ENCODE measurements at regions of chr2 and their contacts with region 1.

Region 1: GRCh38 chr2:43484323-43484930 is 111.4 kb downstream of the THADA start:
- DNase-seq: no peak
- ATAC-seq: peak; percentile 34
- H3K4me3 ChIP-seq: no peak overlapping the region
- H3K27ac ChIP-seq: no peak overlapping the region
- H3K4me1 ChIP-seq: peaks cover 22% of the 10 kb centered on the region
- H3K27me3 ChIP-seq: no peaks in the 10 kb centered on the region
- CTCF ChIP-seq: peak in 2 of 3 experiments; percentile 59 to 73; a peak in 5 of 6 replicates
- EP300 ChIP-seq: no peak
- POLR2A ChIP-seq: no peak
- RAD21 ChIP-seq: peak; percentile 76

Region 2: GRCh38 chr2:42828487-42829425 is 655.7 kb before region 1 on chr2:
- CTCF ChIA-PET with region 1: interaction called, 16 read pairs
- POLR2A ChIA-PET with region 1: no interaction called
- RAD21 ChIA-PET with region 1: interaction called, 4 read pairs
- SMC1A ChIA-PET with region 1: interaction called, 6 read pairs
- in situ Hi-C with region 1: no loop called
- intact Hi-C with region 1: loop called (anchors 2 kb)
- DNase-seq: peak; percentile 15
- ATAC-seq: peak; percentile 97
- H3K4me3 ChIP-seq: no peak overlapping the region
- H3K27ac ChIP-seq: no peak overlapping the region
- H3K4me1 ChIP-seq: no peaks in the 10 kb centered on the region
- H3K27me3 ChIP-seq: no peaks in the 10 kb centered on the region; a peak in 1 of 4 replicates
- CTCF ChIP-seq: peak; percentile 92 to 98 (median 93)
- EP300 ChIP-seq: no peak
- POLR2A ChIP-seq: no peak
- RAD21 ChIP-seq: peak; percentile 82

Region 3: DNA sequence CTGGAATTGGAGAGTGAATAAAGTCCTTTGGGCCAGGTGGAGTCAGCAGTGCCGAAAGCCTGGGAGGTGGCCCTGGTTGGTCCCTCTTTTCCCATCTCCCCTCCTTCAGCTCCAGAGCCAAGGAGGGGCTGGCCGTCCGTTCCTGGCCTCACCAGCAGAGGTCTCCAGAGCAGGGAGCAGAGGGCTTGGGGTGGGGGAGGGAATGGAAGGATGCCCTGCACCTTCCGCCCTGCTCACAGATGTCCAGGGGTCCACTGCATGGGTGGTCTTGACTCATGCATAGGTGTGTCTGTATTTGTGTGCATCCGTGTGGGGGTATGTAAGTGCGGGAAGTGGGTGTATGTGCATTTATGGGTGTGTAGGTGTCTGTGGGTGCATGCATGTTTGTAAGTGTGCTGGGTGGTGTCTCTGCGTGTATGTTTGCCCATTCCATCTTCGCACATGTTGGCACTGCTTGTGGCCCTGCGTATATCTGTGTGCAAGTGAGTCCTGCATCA is 459.9 kb before region 1 on chr2:
- CTCF ChIA-PET with region 1: interaction called, 36 read pairs
- POLR2A ChIA-PET with region 1: no interaction called
- RAD21 ChIA-PET with region 1: interaction called, 13 read pairs
- SMC1A ChIA-PET with region 1: interaction called, 14 read pairs
- in situ Hi-C with region 1: no loop called
- intact Hi-C with region 1: no loop called
- DNase-seq: no peak
- ATAC-seq: peak; percentile 93
- H3K4me3 ChIP-seq: no peak overlapping the region
- H3K27ac ChIP-seq: no peak overlapping the region
- H3K4me1 ChIP-seq: no peaks in the 10 kb centered on the region
- H3K27me3 ChIP-seq: no peaks in the 10 kb centered on the region; a peak in 1 of 4 replicates
- CTCF ChIP-seq: peak; percentile 76 to 87 (median 81)
- EP300 ChIP-seq: no peak
- POLR2A ChIP-seq: no peak
- RAD21 ChIP-seq: peak; percentile 80

Region 4: GRCh38 chr2:43239981-43240761 is 244.3 kb before region 1 on chr2:
- CTCF ChIA-PET with region 1: interaction called, 8 read pairs
- POLR2A ChIA-PET with region 1: no interaction called
- RAD21 ChIA-PET with region 1: interaction called, 13 read pairs
- SMC1A ChIA-PET with region 1: interaction called, 29 read pairs
- in situ Hi-C with region 1: no loop called
- intact Hi-C with region 1: no loop called
- DNase-seq: no peak
- ATAC-seq: peak; percentile 76
- H3K4me3 ChIP-seq: no peak overlapping the region
- H3K27ac ChIP-seq: peak overlapping the region; percentile 70
- H3K4me1 ChIP-seq: peaks cover 17% of the 10 kb centered on the region
- H3K27me3 ChIP-seq: no peaks in the 10 kb centered on the region
- CTCF ChIP-seq: peak; percentile 16 to 26 (median 22); a peak in 3 of 6 replicates
- EP300 ChIP-seq: no peak
- POLR2A ChIP-seq: no peak
- RAD21 ChIP-seq: peak; percentile 15; the same call in 1 of the 2 replicates

Region 5: DNA sequence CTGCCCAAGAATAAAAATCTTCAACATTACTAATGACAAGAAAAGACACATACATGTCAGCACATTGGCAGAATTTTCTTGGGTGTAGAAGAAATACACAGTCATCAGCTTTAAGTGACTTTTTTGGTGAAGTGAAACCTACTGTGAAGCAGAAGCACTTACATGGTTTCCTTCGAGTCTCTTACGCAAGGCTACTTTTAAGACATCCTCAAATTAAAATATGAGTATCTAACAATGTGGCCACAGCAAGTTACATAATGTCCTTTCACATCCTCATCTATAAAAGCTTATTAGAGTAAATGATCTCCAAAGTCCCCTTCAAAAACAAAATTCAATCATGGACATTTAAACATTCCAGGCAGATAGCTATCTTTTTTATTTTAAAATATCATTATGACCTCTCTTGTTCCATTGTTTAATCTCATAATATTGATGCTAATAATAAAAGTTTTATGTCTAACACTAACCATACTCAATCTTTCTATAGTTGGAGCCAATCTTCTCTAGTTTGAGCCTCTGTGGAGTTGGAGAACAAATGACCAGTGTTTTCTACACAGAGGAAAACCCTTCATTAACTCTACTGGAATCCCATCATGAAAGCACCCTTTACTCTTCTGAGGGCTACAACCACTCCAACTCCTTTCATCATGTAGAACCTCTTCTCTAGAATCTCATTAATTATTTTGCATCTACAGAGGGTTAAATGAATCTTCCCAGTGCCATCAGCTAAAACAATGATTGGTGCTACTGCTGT is 75.8 kb before region 1 on chr2:
- CTCF ChIA-PET with region 1: interaction called, 42 read pairs
- POLR2A ChIA-PET with region 1: interaction called, 13 read pairs
- RAD21 ChIA-PET with region 1: interaction called, 112 read pairs
- SMC1A ChIA-PET with region 1: interaction called, 76 read pairs
- in situ Hi-C with region 1: loop called (anchors 5 kb)
- intact Hi-C with region 1: no loop called
- DNase-seq: peak; percentile 76
- ATAC-seq: peak; percentile 86
- H3K4me3 ChIP-seq: no peak overlapping the region
- H3K27ac ChIP-seq: peak overlapping the region; percentile 94
- H3K4me1 ChIP-seq: peaks cover 50% of the 10 kb centered on the region
- H3K27me3 ChIP-seq: no peaks in the 10 kb centered on the region
- CTCF ChIP-seq: no peak
- EP300 ChIP-seq: peak; percentile 71 to 87; a peak in 2 of 4 replicates
- POLR2A ChIP-seq: no peak
- RAD21 ChIP-seq: no peak

Region 6: GRCh38 chr2:43495727-43496126 is 11.3 kb after region 1 on chr2:
- CTCF ChIA-PET with region 1: interaction called, 22 read pairs
- POLR2A ChIA-PET with region 1: no interaction called
- RAD21 ChIA-PET with region 1: interaction called, 3 read pairs
- SMC1A ChIA-PET with region 1: interaction called, 22 read pairs
- in situ Hi-C with region 1: no loop called
- intact Hi-C with region 1: no loop called
- DNase-seq: no peak
- ATAC-seq: no peak
- H3K4me3 ChIP-seq: no peak overlapping the region
- H3K27ac ChIP-seq: no peak overlapping the region
- H3K4me1 ChIP-seq: no peaks in the 10 kb centered on the region
- H3K27me3 ChIP-seq: no peaks in the 10 kb centered on the region
- CTCF ChIP-seq: no peak
- EP300 ChIP-seq: no peak
- POLR2A ChIP-seq: no peak
- RAD21 ChIP-seq: no peak

Region 7: GRCh38 chr2:43595603-43596412 is 111.4 kb after region 1 on chr2 and contains the start of gene THADA:
- CTCF ChIA-PET with region 1: no interaction called
- POLR2A ChIA-PET with region 1: no interaction called
- RAD21 ChIA-PET with region 1: interaction called, 11 read pairs
- SMC1A ChIA-PET with region 1: interaction called, 3 read pairs
- in situ Hi-C with region 1: no loop called
- intact Hi-C with region 1: no loop called
- DNase-seq: peak; percentile 98
- ATAC-seq: peak; percentile 98
- H3K4me3 ChIP-seq: peak within 1 kb of the TSS; percentile 80
- H3K27ac ChIP-seq: peak within 1 kb of the TSS; percentile 94
- H3K4me1 ChIP-seq: peaks cover 3% of the 10 kb centered on the region; the same call in 1 of the 2 replicates
- H3K27me3 ChIP-seq: no peaks in the 10 kb centered on the region
- CTCF ChIP-seq: no peak
- EP300 ChIP-seq: no peak
- POLR2A ChIP-seq: peak; percentile 99
- RAD21 ChIP-seq: no peak
- polyA plus RNA-seq, gene THADA: 17.0 to 17.5 TPM

Region 8: DNA sequence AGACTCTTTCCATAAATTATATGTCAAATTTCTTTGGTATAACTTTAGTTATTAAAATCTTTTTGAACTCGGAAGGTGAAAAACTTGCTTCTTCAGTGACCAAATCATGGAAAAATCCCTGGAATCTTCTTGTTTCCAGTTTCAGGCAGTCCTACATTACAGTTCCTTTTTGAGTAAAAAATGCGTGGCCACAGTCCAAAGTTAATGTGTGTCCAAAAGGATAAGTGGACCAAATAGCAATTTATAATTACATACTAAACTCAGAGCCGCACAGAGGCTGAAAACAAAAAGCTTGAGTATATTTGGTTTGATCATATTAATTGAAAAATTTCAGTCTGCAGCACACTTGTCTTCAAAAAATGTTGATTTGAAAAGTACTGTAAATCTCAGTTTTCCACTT is 261.0 kb after region 1 on chr2:
- CTCF ChIA-PET with region 1: no interaction called
- POLR2A ChIA-PET with region 1: no interaction called
- RAD21 ChIA-PET with region 1: no interaction called
- SMC1A ChIA-PET with region 1: no interaction called
- in situ Hi-C with region 1: no loop called
- intact Hi-C with region 1: no loop called
- DNase-seq: no peak
- ATAC-seq: no peak
- H3K4me3 ChIP-seq: no peak overlapping the region
- H3K27ac ChIP-seq: no peak overlapping the region
- H3K4me1 ChIP-seq: no peaks in the 10 kb centered on the region
- H3K27me3 ChIP-seq: peaks cover 0 to 1% of the 10 kb centered on the region in 2 experiments; a peak in 1 of 4 replicates
- CTCF ChIP-seq: no peak
- EP300 ChIP-seq: no peak
- POLR2A ChIP-seq: no peak
- RAD21 ChIP-seq: no peak

Region 9: GRCh38 chr2:43890855-43891254 is 406.4 kb after region 1 on chr2:
- CTCF ChIA-PET with region 1: no interaction called
- POLR2A ChIA-PET with region 1: no interaction called
- RAD21 ChIA-PET with region 1: no interaction called
- SMC1A ChIA-PET with region 1: no interaction called
- in situ Hi-C with region 1: no loop called
- intact Hi-C with region 1: no loop called
- DNase-seq: no peak
- ATAC-seq: no peak
- H3K4me3 ChIP-seq: no peak overlapping the region
- H3K27ac ChIP-seq: no peak overlapping the region
- H3K4me1 ChIP-seq: 0 out of 2 replicates have a peak, but pooled peaks cover 2% of the 10 kb centered on the region
- H3K27me3 ChIP-seq: no peaks in the 10 kb centered on the region
- CTCF ChIP-seq: no peak
- EP300 ChIP-seq: no peak
- POLR2A ChIP-seq: no peak
- RAD21 ChIP-seq: no peak